ENCODE measurements at regions of chr19 and their contacts with region 1.

Region 1: DNA sequence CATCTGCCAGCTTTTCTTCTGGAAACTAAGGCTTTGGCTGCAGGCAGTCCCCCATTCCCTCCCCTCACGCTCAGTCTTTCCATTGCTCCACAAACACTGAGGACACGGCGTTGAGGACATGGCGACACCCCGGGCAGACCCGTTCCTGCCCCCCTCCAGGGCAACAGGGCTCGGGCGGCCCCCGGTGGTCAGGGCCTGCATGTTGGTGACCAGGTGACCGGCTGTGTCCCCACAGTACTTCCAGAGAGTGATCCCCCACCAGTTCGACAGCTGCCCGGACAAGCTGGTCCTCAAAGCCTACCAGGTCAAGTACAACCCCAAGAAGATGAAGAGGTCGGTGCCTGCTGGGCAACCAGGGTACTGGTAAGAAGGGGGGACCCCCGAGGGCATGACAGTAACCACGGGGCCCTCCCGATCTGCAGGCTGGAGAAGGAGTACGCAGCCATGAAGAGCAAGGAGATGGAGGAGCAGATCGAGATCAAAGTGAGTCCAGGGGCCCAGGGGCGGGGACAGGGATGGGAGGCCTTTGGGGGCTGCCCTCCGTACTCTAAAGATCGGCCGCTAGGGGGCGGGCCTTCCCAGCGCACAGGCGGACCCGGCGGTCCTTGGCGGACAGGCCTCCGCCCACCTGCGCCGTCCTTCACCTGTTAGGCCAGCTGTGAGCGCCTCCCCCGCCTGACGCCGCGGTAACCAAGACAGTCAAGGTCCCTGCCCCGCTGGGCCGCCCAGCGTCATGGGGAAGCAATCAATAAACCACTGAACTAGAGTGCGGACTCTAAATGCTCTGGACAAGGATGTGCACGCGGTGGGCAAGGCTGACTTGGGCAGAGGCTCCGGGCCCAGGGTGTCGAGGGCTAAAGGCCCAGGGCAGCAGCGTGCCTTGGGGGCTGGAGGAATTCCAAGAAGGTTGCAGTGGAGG is 21.1 kb downstream of the PRR36 start:
- DNase-seq: no peak
- H3K4me3 ChIP-seq: no peak overlapping the region
- H3K27me3 ChIP-seq: no peaks in the 10 kb centered on the region
- CTCF ChIP-seq: peak; percentile 87

Region 2: GRCh38 chr19:7629347-7630054 is 223.6 kb before region 1 on chr19 and contains the starts of genes PET100 and XAB2:
- CTCF ChIA-PET with region 1: no interaction called
- POLR2A ChIA-PET with region 1: no interaction called
- DNase-seq: peak; percentile 94
- H3K4me3 ChIP-seq: peak within 1 kb of the TSS; percentile 93
- H3K27me3 ChIP-seq: no peaks in the 10 kb centered on the region
- CTCF ChIP-seq: no peak
- polyA plus RNA-seq, gene PET100: 8.9 and 28.5 TPM in 2 replicates
- polyA plus RNA-seq, gene XAB2: 20.7 and 39.8 TPM in 2 replicates

Region 3: DNA sequence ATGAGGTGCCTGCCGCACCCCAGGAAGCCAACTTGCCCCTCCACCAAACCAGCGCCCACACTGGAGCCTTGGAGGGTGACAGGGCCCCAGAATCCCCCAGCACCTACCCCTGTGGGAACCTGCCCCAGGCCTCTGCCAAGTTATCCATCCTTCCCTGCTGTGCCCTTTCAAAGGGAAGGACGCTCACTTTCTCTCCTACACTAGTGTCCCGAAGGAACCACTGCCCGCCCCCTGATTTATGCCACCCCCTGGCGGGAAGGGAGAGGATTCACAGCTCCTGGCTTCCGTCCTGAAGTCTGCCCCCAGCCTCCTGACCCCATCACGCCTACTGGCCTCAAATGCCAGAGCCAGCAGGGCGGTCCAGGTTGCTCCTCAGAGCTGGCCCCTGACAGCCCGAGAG is 21.7 kb before region 1 on chr19:
- CTCF ChIA-PET with region 1: interaction called, 13 read pairs
- POLR2A ChIA-PET with region 1: no interaction called
- DNase-seq: no peak
- H3K4me3 ChIP-seq: no peak overlapping the region
- H3K27me3 ChIP-seq: no peaks in the 10 kb centered on the region
- CTCF ChIP-seq: peak; percentile 23; the same call in 1 of the 2 replicates

Region 4: GRCh38 chr19:7919610-7920518 is 66.8 kb after region 1 on chr19 and contains the start of gene SNAPC2:
- CTCF ChIA-PET with region 1: interaction called, 29 read pairs
- POLR2A ChIA-PET with region 1: no interaction called
- DNase-seq: peak; percentile 56
- H3K4me3 ChIP-seq: peak within 1 kb of the TSS; percentile 82
- H3K27me3 ChIP-seq: no peaks in the 10 kb centered on the region
- CTCF ChIP-seq: no peak
- polyA plus RNA-seq, gene SNAPC2: 16.6 and 28.2 TPM in 2 replicates

Region 5: DNA sequence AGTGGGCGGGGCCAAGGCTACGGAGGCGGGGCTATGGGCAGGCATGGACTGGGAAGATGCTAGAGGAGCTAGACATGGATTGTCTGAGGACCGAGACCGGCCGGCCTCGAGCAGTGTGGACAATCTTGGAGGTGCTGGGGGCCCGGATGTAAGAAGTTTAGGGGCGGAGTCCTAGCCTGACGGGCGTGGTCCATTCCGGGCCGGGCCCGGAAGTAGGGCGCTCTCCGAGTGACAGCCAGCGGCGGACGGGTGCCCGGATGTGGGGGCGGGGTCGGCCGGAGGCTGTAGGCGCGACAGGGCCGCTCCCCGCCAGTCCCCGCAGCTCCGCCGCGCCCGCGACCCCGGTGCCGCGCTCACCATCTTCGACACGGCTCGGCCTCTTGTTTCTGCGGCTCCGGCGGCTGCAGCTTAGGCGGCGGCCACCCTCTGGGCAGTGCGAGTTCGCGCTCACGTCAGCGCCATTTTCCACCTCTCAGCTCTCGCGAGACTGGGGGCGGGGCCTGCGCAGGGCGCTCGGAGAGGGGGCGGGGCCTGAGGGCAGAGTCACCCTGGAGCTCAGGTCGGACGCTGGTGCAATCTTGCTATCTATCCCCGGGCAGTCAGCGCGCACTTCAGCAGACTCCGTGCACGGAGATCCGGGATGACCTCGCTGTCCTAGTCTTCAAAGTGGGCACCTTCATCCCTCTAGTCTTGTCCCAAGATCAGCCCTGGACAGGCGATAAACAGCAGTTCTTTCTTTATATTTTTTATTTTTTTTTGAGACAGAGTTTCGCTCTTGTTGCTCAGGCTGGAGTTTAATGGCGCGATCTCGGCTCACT is 660.8 kb after region 1 on chr19 and contains the start of gene ZNF414:
- CTCF ChIA-PET with region 1: no interaction called
- POLR2A ChIA-PET with region 1: no interaction called
- DNase-seq: peak; percentile 89
- H3K4me3 ChIP-seq: peak within 1 kb of the TSS; percentile 84
- H3K27me3 ChIP-seq: no peaks in the 10 kb centered on the region
- CTCF ChIP-seq: no peak
- polyA plus RNA-seq, gene ZNF414: 3.7 and 5.7 TPM in 2 replicates